Caco-2 (cell line): ENCODE measurements at regions of chr15 and their contacts with region 1.

Region 1: DNA sequence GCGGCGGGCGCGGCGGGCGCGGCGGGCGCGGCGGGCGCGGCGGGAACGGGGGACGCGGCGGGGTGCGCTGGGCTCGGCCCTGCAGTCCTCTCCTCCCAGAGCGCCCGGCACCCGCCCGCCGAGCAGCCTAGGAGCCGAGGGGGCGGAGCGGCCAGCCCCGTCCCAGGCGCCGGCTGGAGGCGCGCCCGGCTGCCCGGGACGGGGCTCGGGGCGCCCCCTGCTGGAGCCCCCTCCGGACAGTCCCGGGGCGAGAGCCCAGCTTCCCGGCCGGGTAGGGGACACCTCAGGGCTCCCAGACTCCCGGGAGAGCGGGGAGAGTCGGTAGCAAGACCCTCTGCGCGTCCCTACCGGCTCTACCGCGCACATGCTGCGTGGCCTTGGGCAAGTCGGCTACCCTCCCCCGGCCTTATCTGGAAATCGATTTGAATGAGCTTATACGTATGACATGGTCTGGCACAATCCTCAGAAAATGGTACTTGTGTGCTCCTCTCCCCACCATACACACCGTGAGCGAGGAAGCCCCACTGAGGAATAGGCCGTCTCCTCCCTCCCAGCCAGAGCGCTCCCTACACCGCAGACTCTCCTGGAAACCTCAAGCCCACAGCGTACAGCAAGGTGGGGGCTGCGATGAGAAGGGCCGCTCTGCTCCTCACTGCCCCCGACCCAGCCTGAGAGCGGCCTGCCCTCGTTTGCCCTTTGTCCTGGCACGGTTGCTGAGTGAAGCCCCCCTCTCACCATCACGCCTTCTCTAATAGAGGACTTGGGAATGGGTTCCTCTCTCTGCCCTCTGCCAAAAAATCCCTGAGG is at the start of gene DAPK2:
- DNase-seq: peak; percentile 51 to 84
- H3K4me3 ChIP-seq: peak within 1 kb of the TSS; percentile 35
- H3K4me3 Mint-ChIP-seq: peak within 1 kb of the TSS; percentile 67
- H3K27ac Mint-ChIP-seq: no peak within 1 kb of the TSS
- H3K4me1 ChIP-seq: peaks cover 16% of the 10 kb centered on the region
- H3K4me1 Mint-ChIP-seq: peaks cover 11% of the 10 kb centered on the region
- H3K27me3 ChIP-seq: no peaks in the 10 kb centered on the region
- H3K27me3 Mint-ChIP-seq: no peaks in the 10 kb centered on the region
- CTCF ChIP-seq: peak; percentile 73 to 75
- total RNA-seq, gene DAPK2: 1.4 and 2.2 TPM in 2 replicates

Region 2: DNA sequence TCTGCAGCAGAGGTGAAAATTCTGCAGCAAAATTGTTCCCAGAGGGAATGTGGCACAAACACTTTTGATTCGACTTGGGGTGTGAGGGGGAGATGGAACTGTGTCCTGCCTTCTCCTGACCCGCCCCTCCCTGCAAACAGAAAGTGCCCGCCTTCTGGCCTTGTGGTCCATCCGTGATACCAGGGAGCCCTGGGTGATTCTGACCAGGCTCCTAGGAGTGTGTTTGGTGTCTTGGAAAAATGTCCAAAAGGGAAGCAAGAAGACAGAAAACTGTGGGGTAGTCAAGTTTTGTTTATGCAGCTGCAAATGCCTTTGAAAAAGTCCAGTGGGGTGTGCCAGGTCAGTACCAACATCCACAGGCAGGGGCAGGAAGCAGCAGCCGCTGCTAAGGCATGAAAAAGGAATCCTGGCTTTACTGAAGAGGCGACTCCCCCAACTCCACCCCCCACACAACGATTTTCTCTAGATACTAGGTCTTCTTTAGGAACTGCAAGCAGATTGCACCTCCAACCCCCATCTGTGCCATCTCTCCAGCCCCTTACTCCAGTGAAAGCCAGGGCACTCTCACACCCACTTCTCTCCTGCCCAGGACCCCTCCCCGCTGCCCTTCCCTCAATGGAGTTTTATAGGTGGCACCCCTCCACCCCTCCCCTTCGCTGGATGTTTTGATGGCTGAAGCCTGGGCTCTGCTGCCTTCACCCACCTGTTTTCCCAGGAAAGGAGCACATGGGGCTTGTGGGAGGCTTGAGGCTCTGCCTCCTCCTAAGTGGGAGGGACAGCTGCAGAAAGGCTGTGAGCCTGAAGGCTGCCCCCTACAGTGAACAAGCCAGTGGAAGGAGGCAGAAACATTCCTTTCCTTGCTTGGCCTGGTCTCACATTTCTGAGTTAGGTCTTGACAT is 130.4 kb before region 1 on chr15:
- CTCF ChIA-PET with region 1: interaction called, 3 read pairs
- POLR2A ChIA-PET with region 1: no interaction called
- intact Hi-C with region 1: loop called (anchors 10 kb)
- DNase-seq: no peak
- H3K4me3 ChIP-seq: no peak overlapping the region
- H3K4me3 Mint-ChIP-seq: no peak overlapping the region
- H3K27ac Mint-ChIP-seq: no peak overlapping the region
- H3K4me1 ChIP-seq: peaks cover 4% of the 10 kb centered on the region; the same call in 1 of the 2 replicates
- H3K4me1 Mint-ChIP-seq: peaks cover 12% of the 10 kb centered on the region
- H3K27me3 ChIP-seq: no peaks in the 10 kb centered on the region; the same call in 1 of the 2 replicates
- H3K27me3 Mint-ChIP-seq: no peaks in the 10 kb centered on the region
- CTCF ChIP-seq: peak; percentile 9 to 20

Region 3: GRCh38 chr15:63970621-63971426 is 75.7 kb before region 1 on chr15:
- CTCF ChIA-PET with region 1: interaction called, 3 read pairs
- POLR2A ChIA-PET with region 1: no interaction called
- intact Hi-C with region 1: loop called (anchors 5 kb)
- DNase-seq: no peak
- H3K4me3 ChIP-seq: no peak overlapping the region
- H3K4me3 Mint-ChIP-seq: no peak overlapping the region
- H3K27ac Mint-ChIP-seq: no peak overlapping the region
- H3K4me1 ChIP-seq: peaks cover 16% of the 10 kb centered on the region
- H3K4me1 Mint-ChIP-seq: peaks cover 10% of the 10 kb centered on the region
- H3K27me3 ChIP-seq: no peaks in the 10 kb centered on the region
- H3K27me3 Mint-ChIP-seq: no peaks in the 10 kb centered on the region
- CTCF ChIP-seq: no peak